Activated T-helper 1 cell treated with anti-CD3 and anti-CD28 coated beads, Interleukin-12 subunit alpha, Interleukin-12 subunit beta, Interleukin-2, Interleukin-4 antibody, amounts not matched to agents 30 ng/mL and 10 ng/mL and 1 ng/mL, durations not matched to agents 14 hours and 24 hours and 36 hours (primary cell): ENCODE measurements at regions of chr7 and their contacts with region 1.

Region 1: GRCh38 chr7:117582219-117582704 is 102.4 kb downstream of the CFTR start:
- DNase-seq: no peak
- H3K4me3 Mint-ChIP-seq: no peak overlapping the region
- H3K27ac Mint-ChIP-seq: no peak overlapping the region
- H3K4me1 Mint-ChIP-seq: no peaks in the 10 kb centered on the region
- H3K27me3 Mint-ChIP-seq: peaks cover 1% of the 10 kb centered on the region

Region 2: DNA sequence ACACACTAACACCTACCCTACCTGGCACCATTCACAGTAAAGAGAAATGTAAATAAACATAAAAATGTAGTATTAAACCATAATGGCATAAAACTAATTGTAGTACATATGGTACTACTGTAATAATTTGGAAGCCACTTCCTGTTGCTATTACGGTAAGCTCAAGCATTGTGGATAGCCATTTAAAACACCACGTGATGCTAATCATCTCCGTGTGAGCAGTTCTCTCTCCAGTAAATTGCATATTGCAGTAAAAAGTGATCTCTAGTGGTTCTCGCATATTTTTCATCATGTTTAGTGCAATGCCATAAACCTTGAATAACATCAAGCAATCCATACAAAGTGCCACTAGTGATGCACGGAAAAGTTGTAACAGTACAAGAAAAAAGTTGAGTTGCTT is 27.0 kb before region 1 on chr7:
- intact Hi-C with region 1: loop called (anchors 1 kb)
- DNase-seq: no peak
- H3K4me3 Mint-ChIP-seq: no peak overlapping the region
- H3K27ac Mint-ChIP-seq: no peak overlapping the region
- H3K4me1 Mint-ChIP-seq: no peaks in the 10 kb centered on the region
- H3K27me3 Mint-ChIP-seq: no peaks in the 10 kb centered on the region

Region 3: DNA sequence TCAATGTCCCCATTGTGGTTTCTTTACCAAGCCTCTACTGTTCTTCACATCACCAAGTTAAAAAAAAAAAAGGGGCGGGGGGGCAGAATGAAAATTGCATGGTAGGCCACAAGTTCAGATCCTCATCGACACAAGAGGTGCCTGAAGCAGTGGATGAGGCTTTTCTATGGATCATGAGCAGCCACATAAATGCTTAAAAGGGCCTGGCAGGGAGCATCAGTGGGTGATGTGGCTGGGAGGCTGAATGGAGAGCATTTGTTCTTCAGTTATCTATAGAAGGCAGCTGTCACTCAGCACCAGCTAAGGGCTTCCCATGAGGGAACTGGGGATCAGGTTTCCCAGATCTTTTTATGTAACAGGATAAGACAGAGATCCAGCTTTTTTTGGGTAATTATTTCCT is 15.5 kb after region 1 on chr7:
- intact Hi-C with region 1: loop called (anchors 2 kb)
- DNase-seq: no peak
- H3K4me3 Mint-ChIP-seq: no peak overlapping the region
- H3K27ac Mint-ChIP-seq: no peak overlapping the region
- H3K4me1 Mint-ChIP-seq: no peaks in the 10 kb centered on the region
- H3K27me3 Mint-ChIP-seq: peaks cover 3% of the 10 kb centered on the region